AG04450 (cell line): ENCODE measurements at regions of chr18 and their contacts with region 1.

Region 1: DNA sequence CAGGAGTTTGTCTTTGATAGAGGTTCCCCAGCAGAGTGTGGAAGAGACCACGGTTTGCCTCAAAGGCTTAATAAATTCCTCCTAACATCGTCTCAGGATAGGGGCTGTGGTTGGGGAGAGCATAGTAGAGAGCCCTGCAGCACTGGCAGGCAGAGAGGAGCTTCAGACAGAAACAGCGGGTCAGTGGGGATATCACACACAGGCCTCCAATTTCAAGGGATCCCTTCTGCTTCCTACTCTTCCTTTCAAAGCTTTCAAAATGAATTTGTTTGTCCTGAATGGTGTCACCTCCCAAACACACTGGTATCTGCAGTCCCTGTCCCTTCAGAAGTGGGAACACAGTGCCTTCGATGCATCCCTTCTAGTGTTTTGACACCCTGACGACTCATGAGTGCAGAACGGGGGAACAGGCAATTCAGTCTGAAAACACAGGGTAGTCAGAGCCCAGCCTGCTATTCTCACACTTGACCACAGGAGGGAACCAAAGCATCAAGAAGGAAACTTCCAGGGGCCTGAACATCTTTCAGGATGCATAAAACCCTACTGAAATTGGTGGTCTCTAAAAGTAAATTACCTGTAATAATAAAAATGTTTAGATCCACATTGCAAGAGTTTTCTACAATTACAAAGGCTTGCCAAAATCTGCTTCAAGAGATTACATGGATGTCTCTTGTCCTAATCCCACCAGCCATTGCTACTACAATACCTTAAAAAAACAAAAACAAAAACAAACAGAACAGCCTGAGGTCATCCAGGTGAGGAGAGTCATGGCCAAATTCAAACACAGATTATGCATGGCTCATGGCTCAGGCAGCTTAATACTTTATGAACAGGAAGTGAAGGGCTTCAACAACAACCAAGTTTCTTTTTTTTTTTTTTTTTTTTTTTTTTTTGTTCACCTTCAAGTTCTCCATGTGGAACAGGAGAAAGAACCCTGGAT is 49.8 kb downstream of the SLC14A2 start:
- DNase-seq: no peak
- H3K4me3 ChIP-seq: no peak overlapping the region
- H3K27ac ChIP-seq: no peak overlapping the region
- H3K27me3 ChIP-seq: no peaks in the 10 kb centered on the region
- CTCF ChIP-seq: peak; percentile 99

Region 2: DNA sequence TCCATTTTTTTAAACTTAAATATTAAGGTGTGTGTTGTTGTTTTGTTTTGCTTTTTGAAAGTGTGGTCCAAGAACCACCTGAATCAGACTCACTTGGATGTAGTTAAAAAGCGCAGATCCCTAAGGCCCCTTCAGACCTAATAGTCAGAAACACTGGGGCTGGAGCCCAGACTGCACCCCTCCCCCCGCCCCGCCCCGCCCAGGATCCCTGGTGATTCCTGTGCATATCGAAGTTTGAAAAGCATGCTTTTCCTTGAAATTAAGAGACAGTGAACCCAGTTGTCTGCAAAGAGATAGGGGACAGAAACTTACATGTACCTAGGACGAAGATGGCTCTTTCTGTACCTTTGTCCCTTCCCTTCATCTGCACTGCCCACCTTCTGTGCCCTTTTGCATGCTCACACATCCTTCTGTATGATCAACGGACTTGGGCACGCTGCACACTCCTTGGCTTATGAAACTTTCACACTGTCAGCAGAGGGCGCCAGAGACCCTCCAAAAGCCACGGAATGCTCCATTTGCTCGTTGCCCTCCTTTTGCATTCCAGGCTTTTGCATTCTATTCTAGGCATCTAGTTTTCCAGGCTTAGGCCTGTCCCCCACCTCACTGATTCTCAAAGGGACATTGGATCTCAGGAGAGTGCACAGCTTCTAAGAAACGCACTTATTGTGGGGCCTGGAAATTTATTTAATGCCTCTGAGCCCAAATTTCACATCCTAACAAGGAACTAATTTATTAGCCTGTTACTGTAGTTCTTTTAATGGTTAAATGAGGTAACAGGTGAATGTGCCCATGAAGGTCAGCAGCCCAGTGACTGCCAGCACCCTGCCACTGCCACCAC is 26.1 kb after region 1 on chr18:
- CTCF ChIA-PET with region 1: interaction called, 29 read pairs
- POLR2A ChIA-PET with region 1: interaction called, 3 read pairs
- DNase-seq: peak; percentile 60
- H3K4me3 ChIP-seq: no peak overlapping the region
- H3K27ac ChIP-seq: no peak overlapping the region
- H3K27me3 ChIP-seq: no peaks in the 10 kb centered on the region
- CTCF ChIP-seq: peak; percentile 84

Region 3: GRCh38 chr18:45871431-45872054 is 206.4 kb after region 1 on chr18:
- CTCF ChIA-PET with region 1: interaction called, 234 read pairs
- POLR2A ChIA-PET with region 1: no interaction called
- DNase-seq: no peak
- H3K4me3 ChIP-seq: no peak overlapping the region
- H3K27ac ChIP-seq: no peak overlapping the region
- H3K27me3 ChIP-seq: no peaks in the 10 kb centered on the region
- CTCF ChIP-seq: no peak

Region 4: DNA sequence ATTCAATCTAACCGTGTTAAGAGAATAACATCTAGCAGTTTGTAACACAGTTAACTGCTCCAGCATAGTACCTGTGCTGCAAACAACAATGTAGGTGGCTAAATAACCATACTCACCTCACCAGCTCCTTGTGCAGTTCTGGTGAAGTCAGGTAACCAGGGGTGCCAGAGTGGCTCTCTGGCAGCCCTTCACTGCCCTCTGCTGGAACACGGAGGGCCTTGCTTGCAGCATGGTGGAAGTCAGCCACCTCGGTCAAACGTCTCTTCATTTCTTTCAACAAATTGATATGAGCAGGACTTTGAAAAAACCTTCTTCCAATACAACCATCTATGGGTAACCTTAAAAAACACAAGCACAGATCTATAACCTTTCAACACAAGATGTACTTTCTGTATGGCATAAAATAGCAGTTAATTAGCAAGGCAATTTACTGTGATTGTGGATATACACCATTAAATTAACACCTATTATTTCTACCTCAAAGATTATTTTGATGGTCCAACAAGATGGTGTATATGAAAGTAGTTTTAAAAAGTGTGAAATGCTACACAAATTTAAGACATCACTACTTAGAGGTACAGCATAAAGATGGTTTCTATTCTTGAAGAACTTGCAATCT is 245.4 kb after region 1 on chr18:
- CTCF ChIA-PET with region 1: interaction called, 14 read pairs
- POLR2A ChIA-PET with region 1: no interaction called
- DNase-seq: peak; percentile 13
- H3K4me3 ChIP-seq: no peak overlapping the region
- H3K27ac ChIP-seq: no peak overlapping the region
- H3K27me3 ChIP-seq: no peaks in the 10 kb centered on the region
- CTCF ChIP-seq: peak; percentile 85

Region 5: GRCh38 chr18:45974088-45974536 is 309.0 kb after region 1 on chr18:
- CTCF ChIA-PET with region 1: interaction called, 55 read pairs
- POLR2A ChIA-PET with region 1: no interaction called
- DNase-seq: peak; percentile 65
- H3K4me3 ChIP-seq: no peak overlapping the region
- H3K27ac ChIP-seq: no peak overlapping the region
- H3K27me3 ChIP-seq: no peaks in the 10 kb centered on the region
- CTCF ChIP-seq: peak; percentile 81

Region 6: GRCh38 chr18:46073474-46074331 is 408.6 kb after region 1 on chr18:
- CTCF ChIA-PET with region 1: interaction called, 60 read pairs
- POLR2A ChIA-PET with region 1: interaction called, 3 read pairs
- DNase-seq: no peak
- H3K4me3 ChIP-seq: no peak overlapping the region
- H3K27ac ChIP-seq: no peak overlapping the region
- H3K27me3 ChIP-seq: no peaks in the 10 kb centered on the region
- CTCF ChIP-seq: peak; percentile 61